CD8-positive, alpha-beta T cell (primary cell): ENCODE measurements at regions of chr14 and their contacts with region 1.

Region 1: DNA sequence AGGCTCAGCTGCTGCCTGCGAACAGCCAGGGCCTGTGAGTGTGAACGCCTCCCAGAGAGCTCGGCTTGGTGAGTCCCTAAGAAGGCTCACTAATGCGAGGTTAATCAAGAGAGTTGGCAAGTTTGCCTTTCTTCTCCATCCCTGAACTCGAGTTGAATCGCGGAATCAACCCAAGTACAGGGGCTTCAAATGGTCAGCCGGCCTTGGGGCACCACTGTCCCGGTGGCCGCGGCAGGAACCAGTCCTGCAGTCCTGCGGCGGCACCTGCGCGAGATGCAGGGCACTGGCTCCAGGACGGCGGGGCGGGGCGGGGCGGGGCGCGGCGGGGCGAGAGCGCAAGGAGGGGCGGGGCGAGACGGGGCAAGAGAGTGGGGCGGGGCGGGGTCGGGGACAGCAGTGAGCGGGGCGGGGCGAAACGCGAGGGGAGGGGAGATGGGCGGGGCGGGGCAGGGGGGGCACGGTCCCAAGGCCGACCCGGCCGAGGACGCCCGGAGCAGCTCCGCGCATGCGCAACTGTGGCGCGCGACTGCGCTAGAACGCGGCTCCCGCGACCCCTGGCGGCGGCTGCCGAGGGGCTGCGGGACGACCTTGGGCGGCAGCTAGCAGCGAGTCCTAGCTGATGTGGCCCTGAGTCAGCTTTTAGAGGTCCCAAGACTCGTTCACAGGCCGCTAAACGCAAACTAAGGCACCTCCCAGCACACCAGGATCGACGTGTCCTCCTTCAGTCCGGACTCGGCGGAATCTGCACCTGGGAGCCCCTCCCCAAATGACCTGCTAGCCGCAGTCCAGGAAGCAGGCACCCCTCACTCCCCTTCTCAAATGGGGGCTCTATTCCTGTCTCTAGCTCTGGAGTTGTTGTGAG is 58.0 kb downstream of the TTC7B start:
- DNase-seq: peak; percentile 89 to 98 (median 95)
- ATAC-seq: peak; percentile 89
- H3K4me3 ChIP-seq: peak overlapping the region; percentile 58 to 74
- H3K4me3 Mint-ChIP-seq: peak overlapping the region; percentile 80
- H3K27ac ChIP-seq: peak overlapping the region; percentile 54 to 72
- H3K27ac Mint-ChIP-seq: peak overlapping the region; percentile 85
- H3K4me1 ChIP-seq: peaks cover 16% of the 10 kb centered on the region
- H3K4me1 Mint-ChIP-seq: peaks cover 18% of the 10 kb centered on the region
- H3K27me3 ChIP-seq: no peaks in the 10 kb centered on the region
- H3K27me3 Mint-ChIP-seq: peaks cover 3% of the 10 kb centered on the region
- CTCF ChIP-seq: peak; percentile 68

Region 2: GRCh38 chr14:89701211-89702043 is 1056.8 kb before region 1 on chr14:
- CTCF ChIA-PET with region 1: no interaction called
- POLR2A ChIA-PET with region 1: no interaction called
- intact Hi-C with region 1: loop called in 1 of 2 experiments (anchors 10 kb)
- DNase-seq: peak; percentile 66 to 90 (median 82)
- ATAC-seq: peak; percentile 84
- H3K4me3 ChIP-seq: peak overlapping the region; percentile 56 to 69
- H3K4me3 Mint-ChIP-seq: peak overlapping the region; percentile 86
- H3K27ac ChIP-seq: peak overlapping the region; percentile 57 to 62
- H3K27ac Mint-ChIP-seq: peak overlapping the region; percentile 88
- H3K4me1 ChIP-seq: peaks cover 27% of the 10 kb centered on the region
- H3K4me1 Mint-ChIP-seq: peaks cover 53% of the 10 kb centered on the region
- H3K27me3 ChIP-seq: no peaks in the 10 kb centered on the region
- H3K27me3 Mint-ChIP-seq: no peaks in the 10 kb centered on the region
- CTCF ChIP-seq: no peak

Region 3: GRCh38 chr14:90383075-90383730 is 375.1 kb before region 1 on chr14:
- CTCF ChIA-PET with region 1: interaction called, 3 read pairs
- POLR2A ChIA-PET with region 1: interaction called, 41 read pairs
- intact Hi-C with region 1: loop called (anchors 2 kb)
- DNase-seq: peak; percentile 94 to 99 (median 97)
- ATAC-seq: peak; percentile 77
- H3K4me3 ChIP-seq: peak overlapping the region; percentile 88 to 90
- H3K4me3 Mint-ChIP-seq: no peak overlapping the region
- H3K27ac ChIP-seq: peak overlapping the region; percentile 99 to 100
- H3K27ac Mint-ChIP-seq: no peak overlapping the region
- H3K4me1 ChIP-seq: peaks cover 23% of the 10 kb centered on the region
- H3K4me1 Mint-ChIP-seq: peaks cover 28% of the 10 kb centered on the region
- H3K27me3 ChIP-seq: no peaks in the 10 kb centered on the region
- H3K27me3 Mint-ChIP-seq: no peaks in the 10 kb centered on the region
- CTCF ChIP-seq: no peak

Region 4: DNA sequence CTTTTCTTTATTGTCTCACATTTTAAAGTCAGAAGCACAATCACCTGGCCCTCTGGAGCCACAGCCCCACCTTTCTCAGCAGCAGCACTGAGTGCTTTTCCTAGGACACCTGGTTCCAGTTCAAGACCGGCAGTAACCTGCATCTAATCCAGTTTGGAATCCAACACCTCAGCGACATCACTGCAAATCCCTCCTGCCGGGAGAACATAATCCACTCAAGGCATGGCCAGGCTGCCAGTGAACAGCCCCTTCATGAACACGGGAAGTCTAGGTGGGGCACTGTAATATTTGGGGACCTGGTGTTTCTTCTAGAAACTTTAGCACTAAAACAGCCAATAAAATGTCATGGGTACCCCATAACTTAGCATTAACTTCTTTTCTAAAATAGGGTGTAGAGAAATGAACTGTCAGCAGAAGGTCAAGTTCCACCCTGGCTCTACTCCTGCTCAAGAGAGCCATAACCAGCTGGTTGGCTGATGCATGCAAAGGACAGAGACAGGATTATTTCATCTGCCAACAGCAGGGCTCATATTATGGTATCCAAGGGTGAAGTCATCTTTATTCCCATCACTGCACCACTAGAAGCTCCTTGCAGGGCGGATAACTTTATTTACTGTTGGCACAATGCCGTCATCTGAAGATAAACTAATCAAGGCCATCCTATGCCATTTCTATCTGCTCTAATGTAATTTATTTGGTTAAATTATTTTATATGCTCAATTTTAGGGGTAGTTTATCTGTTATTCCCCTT is 18.8 kb before region 1 on chr14:
- CTCF ChIA-PET with region 1: interaction called, 12 read pairs
- POLR2A ChIA-PET with region 1: interaction called, 3 read pairs
- intact Hi-C with region 1: no loop called
- DNase-seq: no peak
- ATAC-seq: no peak
- H3K4me3 ChIP-seq: no peak overlapping the region
- H3K4me3 Mint-ChIP-seq: no peak overlapping the region
- H3K27ac ChIP-seq: no peak overlapping the region
- H3K27ac Mint-ChIP-seq: no peak overlapping the region
- H3K4me1 ChIP-seq: no peaks in the 10 kb centered on the region
- H3K4me1 Mint-ChIP-seq: no peaks in the 10 kb centered on the region
- H3K27me3 ChIP-seq: no peaks in the 10 kb centered on the region
- H3K27me3 Mint-ChIP-seq: no peaks in the 10 kb centered on the region
- CTCF ChIP-seq: no peak

Region 5: DNA sequence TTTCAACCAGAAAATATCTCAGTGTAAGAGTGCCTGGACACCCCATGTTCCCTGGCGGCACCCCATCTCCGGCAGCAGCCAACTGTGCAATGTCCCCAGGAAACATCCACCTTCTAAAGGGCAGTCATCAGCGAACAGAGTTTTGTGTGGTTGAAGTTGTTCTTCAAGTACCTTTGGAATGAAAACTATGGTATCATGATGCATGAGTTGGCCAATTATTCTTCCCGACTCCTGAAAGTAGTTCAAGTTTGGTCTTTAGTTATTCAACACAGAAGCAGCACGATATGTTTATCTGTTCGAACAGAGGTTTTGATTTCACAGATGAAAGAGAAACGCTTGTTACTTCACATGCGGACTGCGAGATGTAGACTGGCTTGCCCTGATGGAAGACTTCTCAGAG is 79.1 kb after region 1 on chr14:
- CTCF ChIA-PET with region 1: no interaction called
- POLR2A ChIA-PET with region 1: no interaction called
- intact Hi-C with region 1: no loop called
- DNase-seq: peak in 1 of 9 experiments; percentile 23
- ATAC-seq: no peak
- H3K4me3 ChIP-seq: no peak overlapping the region
- H3K4me3 Mint-ChIP-seq: no peak overlapping the region
- H3K27ac ChIP-seq: no peak overlapping the region
- H3K27ac Mint-ChIP-seq: no peak overlapping the region
- H3K4me1 ChIP-seq: peaks cover 8% of the 10 kb centered on the region
- H3K4me1 Mint-ChIP-seq: peaks cover 7% of the 10 kb centered on the region
- H3K27me3 ChIP-seq: no peaks in the 10 kb centered on the region
- H3K27me3 Mint-ChIP-seq: peaks cover 6% of the 10 kb centered on the region
- CTCF ChIP-seq: no peak

Region 6: DNA sequence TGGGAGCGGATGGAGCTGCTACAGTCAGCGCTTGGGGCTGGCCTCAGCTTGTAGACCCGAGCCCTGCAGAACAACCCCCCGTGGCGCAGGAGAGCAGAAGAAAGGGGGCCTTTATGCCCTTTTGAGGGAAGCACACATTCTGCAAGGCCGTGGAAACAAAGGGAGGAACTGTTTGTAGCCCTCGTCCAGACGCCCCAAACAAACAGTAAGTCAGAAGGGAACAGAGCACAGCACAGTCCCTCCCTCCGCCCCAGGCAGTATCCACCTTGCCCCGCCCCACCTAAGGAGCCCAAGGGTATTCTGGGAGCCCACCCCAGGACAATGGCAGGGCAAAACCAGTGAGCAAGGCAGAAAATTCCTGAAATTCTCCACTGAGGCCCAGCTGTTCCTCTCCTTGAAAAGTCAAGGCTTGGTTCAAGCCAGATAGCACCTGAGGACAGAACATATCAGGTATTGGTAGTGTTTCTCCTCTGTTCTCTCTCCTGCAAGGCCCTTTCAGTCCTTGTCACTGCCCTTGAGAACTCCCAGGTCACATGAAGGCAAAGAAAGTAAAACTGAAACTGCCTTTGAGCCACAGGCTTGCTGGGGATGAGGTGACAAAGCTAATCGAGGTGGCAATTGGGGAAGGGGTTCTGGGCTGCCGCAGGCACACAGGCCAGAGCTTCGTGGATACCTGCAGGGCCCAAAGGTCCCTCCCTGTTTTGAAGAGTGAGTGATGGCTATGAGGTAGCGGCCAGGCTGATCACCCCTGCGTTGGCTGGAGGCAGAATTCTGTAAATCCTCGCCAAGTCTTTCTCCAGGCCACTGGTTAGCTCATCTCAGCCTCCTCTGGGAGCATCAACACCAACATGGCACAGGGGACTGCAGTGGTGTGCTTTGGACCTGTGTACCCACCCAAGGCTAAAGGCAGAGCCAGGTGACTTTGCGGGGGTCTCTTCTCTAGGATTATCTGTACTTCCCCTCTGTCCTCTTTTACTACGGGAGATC is 356.1 kb after region 1 on chr14:
- CTCF ChIA-PET with region 1: no interaction called
- POLR2A ChIA-PET with region 1: no interaction called
- intact Hi-C with region 1: loop called in 1 of 2 experiments (anchors 1 kb)
- DNase-seq: peak; percentile 22 to 89 (median 65)
- ATAC-seq: peak; percentile 78
- H3K4me3 ChIP-seq: peak overlapping the region; percentile 68 to 93
- H3K4me3 Mint-ChIP-seq: peak overlapping the region; percentile 90
- H3K27ac ChIP-seq: peak overlapping the region; percentile 84 to 88
- H3K27ac Mint-ChIP-seq: peak overlapping the region; percentile 95
- H3K4me1 ChIP-seq: peaks cover 61% of the 10 kb centered on the region
- H3K4me1 Mint-ChIP-seq: peaks cover 68% of the 10 kb centered on the region
- H3K27me3 ChIP-seq: no peaks in the 10 kb centered on the region
- H3K27me3 Mint-ChIP-seq: no peaks in the 10 kb centered on the region
- CTCF ChIP-seq: no peak

Region 7: DNA sequence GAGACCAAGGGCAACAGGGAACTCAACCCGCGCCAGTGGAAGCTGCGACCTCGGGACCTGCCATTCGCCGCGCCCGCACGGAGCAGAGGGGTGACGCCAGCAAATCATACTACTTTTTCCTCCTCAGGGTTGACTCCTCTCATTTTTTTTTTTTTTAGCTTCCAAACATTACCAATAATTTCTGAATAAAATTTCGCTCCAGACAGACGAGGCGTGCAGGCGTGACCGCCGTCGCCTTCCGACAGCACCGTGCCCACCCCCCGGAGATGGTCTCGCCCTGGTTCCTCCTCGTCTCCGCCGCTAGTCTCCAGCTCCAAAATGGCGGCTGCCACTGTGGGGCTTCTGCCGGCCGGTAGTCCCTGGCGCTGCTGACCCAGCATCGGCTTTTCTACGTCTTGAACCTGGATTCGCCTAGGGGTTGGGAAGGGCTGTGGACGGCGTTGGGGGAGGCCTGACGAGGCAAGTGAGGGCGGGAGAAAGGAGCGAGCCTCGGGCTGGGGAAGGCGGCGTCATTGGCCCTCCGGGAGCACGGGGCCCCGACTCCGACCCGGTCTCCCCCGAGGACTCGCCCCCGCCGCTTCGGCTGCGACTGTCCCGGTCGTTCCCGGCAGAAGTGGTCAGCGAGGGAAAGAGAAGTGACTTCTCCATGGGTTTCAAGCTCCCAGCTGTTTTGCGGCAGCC is 1363.6 kb after region 1 on chr14 and contains the starts of genes CPSF2 and NDUFB1:
- CTCF ChIA-PET with region 1: no interaction called
- POLR2A ChIA-PET with region 1: no interaction called
- intact Hi-C with region 1: loop called in 1 of 2 experiments (anchors 5 kb)
- DNase-seq: peak; percentile 70 to 90 (median 83)
- ATAC-seq: peak; percentile 85
- H3K4me3 ChIP-seq: peak within 1 kb of the TSS; percentile 81 to 86
- H3K4me3 Mint-ChIP-seq: peak within 1 kb of the TSS; percentile 99
- H3K27ac ChIP-seq: peak within 1 kb of the TSS; percentile 88 to 89
- H3K27ac Mint-ChIP-seq: peak within 1 kb of the TSS; percentile 99
- H3K4me1 ChIP-seq: peaks cover 31% of the 10 kb centered on the region
- H3K4me1 Mint-ChIP-seq: peaks cover 55% of the 10 kb centered on the region
- H3K27me3 ChIP-seq: no peaks in the 10 kb centered on the region
- H3K27me3 Mint-ChIP-seq: no peaks in the 10 kb centered on the region
- CTCF ChIP-seq: no peak
- total RNA-seq, gene CPSF2: 12.1 to 14.2 TPM
- total RNA-seq, gene NDUFB1: 38.5 to 43.9 TPM